Common myeloid progenitor, CD34-positive (primary cell): ENCODE measurements at regions of chr11 and their contacts with region 1.

Region 1: DNA sequence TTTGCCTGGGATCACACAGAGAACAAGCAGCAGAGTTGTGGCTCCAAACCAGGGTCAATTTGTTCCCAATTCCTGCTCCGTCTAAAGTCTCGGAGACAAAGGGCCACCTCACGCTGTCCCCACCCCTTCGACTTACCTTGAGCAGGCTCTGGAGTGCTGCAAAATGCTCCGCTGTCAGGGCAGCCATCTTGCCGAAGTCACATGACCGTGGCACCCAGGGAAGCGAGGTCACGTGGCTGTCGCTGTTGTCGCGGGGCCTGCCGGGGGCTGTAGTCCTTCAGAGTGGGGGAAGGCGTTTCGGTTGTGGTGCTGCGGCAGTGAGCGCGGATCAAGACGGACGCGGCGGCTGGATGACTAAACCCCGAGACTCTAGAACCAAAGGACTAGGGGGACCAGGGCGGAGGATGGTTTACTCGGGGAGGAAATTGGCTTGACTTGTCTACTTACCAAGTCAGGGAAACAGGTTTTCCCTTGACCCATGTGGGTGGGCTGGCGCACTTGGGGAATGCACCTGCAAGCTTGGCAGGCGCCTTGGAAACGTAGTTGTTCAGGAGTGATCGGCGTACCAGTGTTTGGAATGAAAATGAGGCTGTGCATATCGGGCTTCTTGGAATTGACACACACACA is at the start of gene COMMD9:
- DNase-seq: peak; percentile 93 to 96 (median 95)
- H3K4me3 ChIP-seq: peak within 1 kb of the TSS; percentile 87 to 100 (median 97)
- H3K27ac ChIP-seq: peak within 1 kb of the TSS; percentile 51 to 82
- H3K4me1 ChIP-seq: peaks cover 6 to 18% (median 13%) of the 10 kb centered on the region in 4 experiments
- H3K27me3 ChIP-seq: no peaks in the 10 kb centered on the region

Region 2: DNA sequence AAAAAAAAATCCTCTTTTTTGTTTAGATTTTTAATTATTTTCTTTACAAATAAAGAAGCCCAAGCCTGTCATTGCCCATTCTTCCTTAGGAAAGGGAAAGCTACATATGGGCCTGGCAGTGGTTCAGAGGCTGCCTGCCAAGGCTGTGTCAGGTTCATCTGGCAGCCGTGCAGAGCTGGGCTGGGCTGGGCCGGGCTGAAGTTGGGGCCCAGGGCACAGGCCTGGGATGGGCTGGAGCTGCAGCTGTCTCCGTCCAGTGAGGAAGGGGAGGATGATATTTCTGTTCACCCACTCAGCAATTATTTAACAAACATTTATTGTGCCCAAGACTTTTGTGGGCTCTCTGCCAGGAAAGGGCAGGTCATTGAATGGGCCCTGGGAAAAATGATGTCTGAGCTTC is 11.3 kb after region 1 on chr11:
- CTCF ChIA-PET with region 1: interaction called, 19 read pairs
- POLR2A ChIA-PET with region 1: no interaction called
- DNase-seq: no peak
- H3K4me3 ChIP-seq: no peak overlapping the region
- H3K27ac ChIP-seq: no peak overlapping the region
- H3K4me1 ChIP-seq: peaks cover 0 to 5% (median 2%) of the 10 kb centered on the region in 4 experiments
- H3K27me3 ChIP-seq: no peaks in the 10 kb centered on the region

Region 3: GRCh38 chr11:36390963-36391471 is 101.7 kb after region 1 on chr11:
- CTCF ChIA-PET with region 1: no interaction called
- POLR2A ChIA-PET with region 1: no interaction called
- DNase-seq: peak; percentile 53 to 90 (median 83)
- H3K4me3 ChIP-seq: peak overlapping the region in 1 of 7 experiments; percentile 5
- H3K27ac ChIP-seq: no peak overlapping the region
- H3K4me1 ChIP-seq: peaks cover 11 to 72% (median 39%) of the 10 kb centered on the region in 4 experiments
- H3K27me3 ChIP-seq: no peaks in the 10 kb centered on the region

Region 4: DNA sequence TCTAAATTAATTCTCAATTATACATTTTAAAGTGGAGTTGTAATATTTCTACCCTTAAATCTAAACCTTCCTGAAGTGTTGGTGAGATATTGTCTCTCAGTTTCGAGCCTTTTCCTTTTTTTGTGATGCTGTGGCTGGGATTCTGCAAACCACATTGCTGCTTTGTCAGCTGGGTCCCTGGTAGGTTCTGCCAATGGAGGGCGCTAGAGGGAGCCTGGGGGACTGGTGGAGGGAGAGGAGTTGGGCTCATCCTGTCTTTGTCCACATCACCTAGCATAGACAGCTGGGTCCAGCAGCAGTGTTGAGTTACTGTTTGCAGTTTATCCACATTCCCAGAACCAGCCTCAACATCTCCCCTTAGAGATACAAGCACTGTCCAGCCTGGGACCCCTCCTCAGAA is 179.7 kb after region 1 on chr11:
- CTCF ChIA-PET with region 1: interaction called, 191 read pairs
- POLR2A ChIA-PET with region 1: no interaction called
- DNase-seq: peak in 2 of 3 donors; percentile 24 to 27
- H3K4me3 ChIP-seq: no peak overlapping the region
- H3K27ac ChIP-seq: no peak overlapping the region
- H3K4me1 ChIP-seq: peaks cover 0 to 12% (median 0%) of the 10 kb centered on the region in 4 experiments
- H3K27me3 ChIP-seq: no peaks in the 10 kb centered on the region